ENCODE measurements at regions of chr2 and their contacts with region 1.

Region 1: GRCh38 chr2:18402-19271 is 27.7 kb downstream of the FAM110C start:
- DNase-seq: no peak
- ATAC-seq: no peak
- H3K4me3 Mint-ChIP-seq: no peak overlapping the region
- H3K27ac Mint-ChIP-seq: no peak overlapping the region
- H3K4me1 Mint-ChIP-seq: peaks cover 3% of the 10 kb centered on the region
- H3K27me3 Mint-ChIP-seq: peaks cover 10% of the 10 kb centered on the region
- CTCF ChIP-seq: peak; percentile 68

Region 2: DNA sequence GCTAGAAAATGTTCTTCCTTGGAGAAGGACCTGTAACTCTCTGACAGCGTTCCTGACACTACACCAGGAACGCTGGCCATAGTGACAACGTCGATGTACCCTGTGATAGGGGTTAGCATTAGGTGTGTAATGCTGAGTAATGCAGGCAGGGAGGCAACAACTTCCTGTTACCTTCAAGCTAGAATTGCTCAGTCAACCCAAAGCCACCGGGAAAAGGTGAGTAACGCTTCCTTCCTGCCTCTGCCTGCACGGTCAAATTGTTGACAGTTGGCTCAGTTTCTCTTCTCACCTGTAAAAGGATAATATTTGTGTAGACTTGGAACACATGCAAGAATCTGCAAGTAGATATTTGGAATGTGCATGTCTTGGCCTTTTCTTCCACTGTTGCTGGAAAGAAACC is 15.0 kb after region 1 on chr2:
- CTCF ChIA-PET with region 1: no interaction called
- POLR2A ChIA-PET with region 1: no interaction called
- intact Hi-C with region 1: no loop called
- DNase-seq: peak; percentile 75
- ATAC-seq: peak; percentile 92
- H3K4me3 Mint-ChIP-seq: peak overlapping the region; percentile 31
- H3K27ac Mint-ChIP-seq: peak overlapping the region; percentile 70
- H3K4me1 Mint-ChIP-seq: peaks cover 21% of the 10 kb centered on the region
- H3K27me3 Mint-ChIP-seq: no peaks in the 10 kb centered on the region
- CTCF ChIP-seq: no peak

Region 3: DNA sequence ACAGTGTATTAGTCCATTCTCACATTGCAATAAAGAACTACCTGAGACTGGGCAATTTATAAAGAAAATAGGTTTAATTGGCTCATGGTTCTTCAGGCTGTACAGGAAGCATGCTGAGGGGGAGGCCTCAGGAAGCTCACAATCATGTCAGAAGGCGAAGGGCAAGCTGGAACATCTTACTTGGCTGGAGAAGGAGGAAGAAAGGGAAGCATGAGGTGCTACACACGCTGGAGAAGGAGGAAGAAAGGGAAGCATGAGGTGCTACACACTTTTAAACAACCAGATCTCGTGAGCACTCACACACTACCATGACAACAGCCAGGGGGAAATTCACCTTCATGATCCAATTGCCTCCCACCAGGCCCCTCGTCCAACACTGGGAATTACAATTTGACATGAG is 123.0 kb after region 1 on chr2:
- CTCF ChIA-PET with region 1: interaction called, 15 read pairs
- POLR2A ChIA-PET with region 1: no interaction called
- intact Hi-C with region 1: no loop called
- DNase-seq: no peak
- ATAC-seq: no peak
- H3K4me3 Mint-ChIP-seq: no peak overlapping the region
- H3K27ac Mint-ChIP-seq: no peak overlapping the region
- H3K4me1 Mint-ChIP-seq: no peaks in the 10 kb centered on the region
- H3K27me3 Mint-ChIP-seq: peaks cover 5% of the 10 kb centered on the region
- CTCF ChIP-seq: no peak

Measured in activated CD8-positive, alpha-beta T cell treated with anti-CD3 and anti-CD28 coated beads for 36 hours (primary cell).